Mammary epithelial cell (primary cell): ENCODE measurements at regions of chr12 and their contacts with region 1.

Region 1: GRCh38 chr12:92654929-92655328 is 47.9 kb upstream of the PLEKHG7 start:
- DNase-seq: no peak
- H3K4me3 ChIP-seq: no peak overlapping the region
- H3K27ac ChIP-seq: no peak overlapping the region
- H3K4me1 ChIP-seq: no peaks in the 10 kb centered on the region
- H3K27me3 ChIP-seq: no peaks in the 10 kb centered on the region
- CTCF ChIP-seq: no peak

Region 2: GRCh38 chr12:92582475-92582874 is 72.5 kb before region 1 on chr12:
- CTCF ChIA-PET with region 1: interaction called, 3 read pairs
- dilution Hi-C with region 1: loop called (anchors 5 kb)
- in situ Hi-C with region 1: no loop called
- intact Hi-C with region 1: no loop called
- DNase-seq: no peak
- H3K4me3 ChIP-seq: no peak overlapping the region
- H3K27ac ChIP-seq: no peak overlapping the region
- H3K4me1 ChIP-seq: no peaks in the 10 kb centered on the region
- H3K27me3 ChIP-seq: no peaks in the 10 kb centered on the region
- CTCF ChIP-seq: no peak

Region 3: GRCh38 chr12:92938018-92938417 is 283.1 kb after region 1 on chr12:
- CTCF ChIA-PET with region 1: no interaction called
- dilution Hi-C with region 1: no loop called
- in situ Hi-C with region 1: no loop called
- intact Hi-C with region 1: no loop called
- DNase-seq: peak; percentile 63
- H3K4me3 ChIP-seq: no peak overlapping the region
- H3K27ac ChIP-seq: peak overlapping the region; percentile 93
- H3K4me1 ChIP-seq: peaks cover 30% of the 10 kb centered on the region
- H3K27me3 ChIP-seq: no peaks in the 10 kb centered on the region
- CTCF ChIP-seq: no peak

Region 4: DNA sequence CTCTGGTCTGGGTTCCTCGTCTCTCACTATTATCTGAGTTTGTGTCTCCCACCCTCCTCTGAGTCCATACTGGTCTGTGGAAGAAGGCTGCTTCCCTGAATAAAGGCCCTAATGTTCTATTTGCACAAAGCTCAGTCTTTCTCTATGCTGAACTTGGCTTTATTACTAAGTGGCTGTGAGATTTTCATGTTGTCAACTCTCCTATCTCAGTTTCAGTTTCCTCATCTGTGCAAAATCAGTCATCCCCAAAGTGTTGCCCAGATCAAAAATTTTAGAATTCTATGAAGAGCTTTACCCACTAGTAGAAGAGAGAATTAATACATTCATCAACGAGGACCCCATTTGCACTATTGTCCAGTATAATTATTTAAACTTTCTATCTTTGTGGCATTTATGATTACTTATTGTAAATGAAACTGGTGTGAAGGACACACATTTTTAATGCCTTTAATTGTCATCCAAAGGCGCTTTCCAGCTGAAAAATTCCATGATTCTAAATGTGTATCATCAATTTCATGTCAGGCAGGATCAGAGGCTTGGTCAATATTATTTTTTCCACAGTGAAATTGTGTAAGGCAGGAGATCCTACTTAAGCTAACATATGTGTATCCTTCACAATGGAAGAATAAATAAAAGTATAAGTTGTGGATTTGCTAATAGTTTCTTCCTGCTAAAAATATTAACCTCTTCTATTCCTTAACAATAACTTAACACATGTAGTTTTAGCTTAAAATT is 353.3 kb after region 1 on chr12:
- CTCF ChIA-PET with region 1: no interaction called
- dilution Hi-C with region 1: no loop called
- in situ Hi-C with region 1: no loop called
- intact Hi-C with region 1: no loop called
- DNase-seq: no peak
- H3K4me3 ChIP-seq: no peak overlapping the region
- H3K27ac ChIP-seq: no peak overlapping the region
- H3K4me1 ChIP-seq: no peaks in the 10 kb centered on the region
- H3K27me3 ChIP-seq: no peaks in the 10 kb centered on the region
- CTCF ChIP-seq: no peak